GM23248 (cell line): ENCODE measurements at regions of chr14 and their contacts with region 1.

Region 1: GRCh38 chr14:74608959-74609611 is 3.0 kb downstream of the LTBP2 start:
- DNase-seq: peak; percentile 86
- H3K4me3 ChIP-seq: peak overlapping the region; percentile 97
- H3K27ac ChIP-seq: no peak overlapping the region
- H3K4me1 ChIP-seq: peaks cover 54% of the 10 kb centered on the region
- H3K27me3 ChIP-seq: no peaks in the 10 kb centered on the region

Region 2: GRCh38 chr14:74793506-74794168 is 184.6 kb after region 1 on chr14:
- in situ Hi-C with region 1: loop called (anchors 10 kb)
- DNase-seq: peak; percentile 50
- H3K4me3 ChIP-seq: peak overlapping the region; percentile 21; the same call in 1 of the 2 replicates
- H3K27ac ChIP-seq: peak overlapping the region; percentile 69
- H3K4me1 ChIP-seq: peaks cover 32% of the 10 kb centered on the region
- H3K27me3 ChIP-seq: no peaks in the 10 kb centered on the region

Region 3: DNA sequence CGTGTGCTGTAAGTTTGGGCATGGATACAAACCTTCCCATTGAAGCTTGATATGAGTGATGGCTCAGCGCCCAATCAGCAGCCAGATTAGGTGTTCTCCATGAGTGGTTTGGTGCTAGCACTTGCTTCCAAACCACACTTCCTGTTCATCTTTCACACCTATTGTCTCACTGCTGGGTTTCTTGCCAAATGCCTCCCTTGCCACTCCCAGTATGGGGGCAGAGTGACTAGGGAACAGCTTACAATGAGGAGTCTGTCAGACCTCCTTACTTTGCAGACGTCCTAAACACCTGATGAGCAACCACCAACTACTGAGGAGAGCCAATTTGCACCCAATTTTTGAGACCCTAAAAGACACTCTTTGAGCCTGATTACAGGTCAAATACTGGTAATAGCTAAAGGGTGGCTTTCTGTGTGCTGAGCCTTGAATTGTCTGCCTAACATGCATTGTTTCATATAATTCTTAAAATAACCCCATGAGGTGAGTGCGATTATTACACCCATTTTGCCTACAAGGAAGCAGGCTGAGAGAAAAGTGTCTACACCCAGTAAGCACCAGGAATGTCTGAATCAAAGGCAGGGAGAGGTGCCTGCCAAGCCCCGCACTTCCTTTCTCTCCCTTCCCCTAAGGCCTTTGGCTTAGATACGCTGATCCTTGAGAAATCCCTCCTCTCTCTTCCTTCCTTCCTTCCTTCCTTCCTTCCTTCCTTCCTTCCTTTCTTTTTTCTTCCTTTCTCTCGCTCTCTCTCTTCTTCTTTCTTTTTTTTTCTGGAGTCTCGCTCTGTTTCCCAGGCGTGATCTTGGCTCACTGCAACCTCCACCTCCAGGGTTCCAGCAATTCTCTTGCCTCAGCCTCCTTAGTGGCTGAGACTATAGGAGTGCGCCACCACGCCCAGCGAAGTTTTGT is 621.3 kb after region 1 on chr14:
- in situ Hi-C with region 1: no loop called
- DNase-seq: peak; percentile 66
- H3K4me3 ChIP-seq: no peak overlapping the region
- H3K27ac ChIP-seq: no peak overlapping the region
- H3K4me1 ChIP-seq: peaks cover 18% of the 10 kb centered on the region
- H3K27me3 ChIP-seq: no peaks in the 10 kb centered on the region